Calu3 (cell line): ENCODE measurements at regions of chr11 and their contacts with region 1.

Region 1: GRCh38 chr11:73393479-73394380 is 17.5 kb downstream of the RELT start:
- DNase-seq: peak; percentile 79
- H3K4me3 Mint-ChIP-seq: no peak overlapping the region
- H3K27ac Mint-ChIP-seq: no peak overlapping the region
- H3K4me1 Mint-ChIP-seq: peaks cover 12% of the 10 kb centered on the region
- H3K27me3 Mint-ChIP-seq: no peaks in the 10 kb centered on the region
- CTCF ChIP-seq: peak; percentile 71

Region 2: GRCh38 chr11:73350908-73351636 is 42.7 kb before region 1 on chr11:
- CTCF ChIA-PET with region 1: interaction called, 39 read pairs
- intact Hi-C with region 1: loop called (anchors 1 kb)
- DNase-seq: peak; percentile 61
- H3K4me3 Mint-ChIP-seq: no peak overlapping the region
- H3K27ac Mint-ChIP-seq: no peak overlapping the region
- H3K4me1 Mint-ChIP-seq: no peaks in the 10 kb centered on the region
- H3K27me3 Mint-ChIP-seq: no peaks in the 10 kb centered on the region
- CTCF ChIP-seq: peak; percentile 88

Region 3: GRCh38 chr11:73470041-73470612 is 76.4 kb after region 1 on chr11:
- CTCF ChIA-PET with region 1: no interaction called
- intact Hi-C with region 1: no loop called
- DNase-seq: no peak
- H3K4me3 Mint-ChIP-seq: no peak overlapping the region
- H3K27ac Mint-ChIP-seq: no peak overlapping the region
- H3K4me1 Mint-ChIP-seq: no peaks in the 10 kb centered on the region
- H3K27me3 Mint-ChIP-seq: no peaks in the 10 kb centered on the region
- CTCF ChIP-seq: no peak

Region 4: DNA sequence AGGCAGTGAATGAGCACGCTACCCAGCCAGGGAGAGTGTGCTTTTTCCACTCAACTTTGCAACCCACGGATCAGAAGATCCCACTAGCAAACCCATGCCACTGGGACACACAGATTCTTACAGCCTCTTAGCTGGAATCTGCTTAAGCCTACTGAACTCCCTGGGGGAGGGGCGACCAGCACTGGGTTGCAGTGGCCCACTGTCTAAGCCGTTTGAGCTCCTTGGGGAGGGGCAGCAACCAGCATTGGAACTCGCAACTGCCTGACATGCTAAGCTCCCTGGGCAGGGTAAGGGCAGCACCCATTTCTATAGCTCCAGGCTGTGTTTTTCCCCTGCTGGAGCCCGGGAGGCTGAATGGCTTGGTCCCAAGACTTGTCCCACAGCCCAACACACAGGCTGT is 104.6 kb after region 1 on chr11:
- CTCF ChIA-PET with region 1: no interaction called
- intact Hi-C with region 1: no loop called
- DNase-seq: no peak
- H3K4me3 Mint-ChIP-seq: no peak overlapping the region
- H3K27ac Mint-ChIP-seq: no peak overlapping the region
- H3K4me1 Mint-ChIP-seq: peaks cover 11% of the 10 kb centered on the region
- H3K27me3 Mint-ChIP-seq: no peaks in the 10 kb centered on the region
- CTCF ChIP-seq: no peak